ENCODE measurements at regions of chr11 and their contacts with region 1.

Region 1: GRCh38 chr11:105870516-105871113 is 151.4 kb downstream of the MSANTD4 start:
- DNase-seq: no peak
- H3K4me3 ChIP-seq: no peak overlapping the region
- H3K27ac ChIP-seq: no peak overlapping the region
- H3K4me1 ChIP-seq: no peaks in the 10 kb centered on the region
- H3K27me3 ChIP-seq: no peaks in the 10 kb centered on the region
- CTCF ChIP-seq: no peak
- POLR2A ChIP-seq: no peak

Region 2: DNA sequence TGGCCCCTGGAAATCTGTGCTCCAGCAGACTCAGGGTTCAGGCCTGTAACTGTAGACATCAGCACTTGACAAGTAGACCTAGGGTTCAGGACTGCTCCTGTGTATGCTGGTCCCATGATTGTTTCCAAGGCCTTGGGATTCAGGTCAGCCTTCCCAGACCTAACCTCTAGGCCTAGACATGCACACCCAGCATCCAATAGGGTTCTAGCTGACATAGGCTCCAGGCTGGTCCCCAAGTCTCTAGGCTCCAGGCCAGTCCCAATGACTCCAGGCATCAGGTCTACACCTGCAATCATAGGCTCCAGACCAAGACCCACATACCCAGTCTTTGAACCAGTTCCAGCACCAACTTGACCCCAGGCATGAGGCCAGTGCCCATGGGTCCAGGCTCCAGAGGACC is 427.0 kb before region 1 on chr11:
- intact Hi-C with region 1: no loop called
- DNase-seq: no peak
- H3K4me3 ChIP-seq: no peak overlapping the region
- H3K27ac ChIP-seq: no peak overlapping the region
- H3K4me1 ChIP-seq: no peaks in the 10 kb centered on the region
- H3K27me3 ChIP-seq: no peaks in the 10 kb centered on the region
- CTCF ChIP-seq: no peak
- POLR2A ChIP-seq: no peak

Region 3: GRCh38 chr11:105489446-105489845 is 381.2 kb before region 1 on chr11:
- intact Hi-C with region 1: no loop called
- DNase-seq: no peak
- H3K4me3 ChIP-seq: no peak overlapping the region
- H3K27ac ChIP-seq: no peak overlapping the region
- H3K4me1 ChIP-seq: no peaks in the 10 kb centered on the region
- H3K27me3 ChIP-seq: no peaks in the 10 kb centered on the region
- CTCF ChIP-seq: no peak
- POLR2A ChIP-seq: no peak

Region 4: GRCh38 chr11:106552694-106553203 is 682.1 kb after region 1 on chr11:
- intact Hi-C with region 1: loop called (anchors 5 kb)
- DNase-seq: no peak
- H3K4me3 ChIP-seq: no peak overlapping the region
- H3K27ac ChIP-seq: no peak overlapping the region
- H3K4me1 ChIP-seq: no peaks in the 10 kb centered on the region
- H3K27me3 ChIP-seq: no peaks in the 10 kb centered on the region
- CTCF ChIP-seq: no peak
- POLR2A ChIP-seq: no peak